ENCODE measurements at regions of chr19 and their contacts with region 1.

Region 1: DNA sequence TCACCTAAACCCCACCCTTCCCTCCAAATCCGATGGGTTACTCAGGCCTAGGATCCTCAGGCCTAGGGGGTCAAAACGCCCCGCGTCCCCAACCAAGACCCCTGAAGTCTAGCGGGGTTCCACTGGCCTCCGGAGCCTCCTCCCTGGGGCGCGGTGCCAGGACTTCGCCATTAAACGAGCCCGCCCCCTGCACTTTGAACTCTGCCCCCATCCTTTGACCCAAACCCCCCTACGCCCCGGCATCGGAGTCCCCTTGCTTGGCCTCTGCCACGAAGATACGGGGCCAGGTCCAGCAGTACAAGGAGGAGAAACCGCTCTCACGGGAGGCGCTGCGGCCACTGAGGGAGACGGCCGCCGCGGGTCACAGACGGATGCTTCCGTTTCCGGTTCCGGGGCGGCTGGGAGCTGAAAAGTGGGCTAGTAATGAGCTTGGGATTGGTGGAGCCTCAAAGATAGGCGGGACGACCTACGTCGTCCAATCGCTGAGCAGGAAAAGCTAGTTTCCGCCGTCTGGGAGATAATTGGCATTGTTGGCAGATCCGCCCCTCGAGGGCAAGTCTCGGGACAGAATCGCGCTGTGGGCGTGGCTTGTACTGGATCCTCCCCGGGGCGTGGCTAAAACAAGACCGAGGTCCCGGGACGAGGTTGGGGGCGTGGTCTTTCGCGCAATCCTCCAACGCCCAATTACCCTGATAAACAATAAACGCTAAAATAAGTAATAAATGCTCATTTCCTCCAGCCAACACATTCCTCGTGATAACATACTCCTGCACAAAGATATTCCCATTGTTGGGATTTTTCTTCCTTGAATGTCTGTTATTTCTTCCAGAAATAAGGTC is 5.7 kb upstream of the ZNF77 start:
- DNase-seq: peak; percentile 100
- ATAC-seq: peak; percentile 96
- H3K4me3 Mint-ChIP-seq: peak overlapping the region; percentile 92
- H3K27ac Mint-ChIP-seq: peak overlapping the region; percentile 96
- H3K4me1 Mint-ChIP-seq: peaks cover 21% of the 10 kb centered on the region
- H3K27me3 Mint-ChIP-seq: no peaks in the 10 kb centered on the region
- CTCF ChIP-seq: no peak

Region 2: DNA sequence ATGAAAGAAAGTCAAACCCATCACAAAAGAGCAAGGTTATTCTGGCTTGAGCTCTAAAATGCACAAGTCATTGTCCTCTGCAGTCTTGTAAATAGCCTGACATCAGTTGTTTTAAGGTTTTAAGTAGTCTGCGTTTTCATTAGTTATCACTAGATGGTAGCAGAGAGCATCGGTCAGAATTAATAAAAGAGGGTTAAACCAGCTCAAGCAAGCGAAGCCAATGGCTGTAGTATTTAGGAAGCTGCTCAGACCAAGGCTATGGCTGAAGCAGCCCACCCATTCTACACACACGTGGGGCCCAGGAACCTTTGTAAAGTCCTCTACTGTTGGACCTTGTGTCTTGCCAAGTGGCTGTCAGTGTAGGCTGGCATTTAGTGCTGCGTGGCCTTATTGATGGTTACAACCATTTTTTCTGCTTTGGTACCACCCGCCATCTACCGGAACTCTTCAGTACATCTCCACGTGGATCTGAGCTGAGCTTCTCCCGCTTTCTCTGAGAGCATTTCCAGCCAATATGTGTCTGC is 63.1 kb before region 1 on chr19:
- CTCF ChIA-PET with region 1: interaction called, 15 read pairs
- POLR2A ChIA-PET with region 1: no interaction called
- intact Hi-C with region 1: no loop called
- DNase-seq: no peak
- ATAC-seq: peak; percentile 69
- H3K4me3 Mint-ChIP-seq: no peak overlapping the region
- H3K27ac Mint-ChIP-seq: no peak overlapping the region
- H3K4me1 Mint-ChIP-seq: peaks cover 11% of the 10 kb centered on the region
- H3K27me3 Mint-ChIP-seq: peaks cover 3% of the 10 kb centered on the region
- CTCF ChIP-seq: peak; percentile 76

Region 3: DNA sequence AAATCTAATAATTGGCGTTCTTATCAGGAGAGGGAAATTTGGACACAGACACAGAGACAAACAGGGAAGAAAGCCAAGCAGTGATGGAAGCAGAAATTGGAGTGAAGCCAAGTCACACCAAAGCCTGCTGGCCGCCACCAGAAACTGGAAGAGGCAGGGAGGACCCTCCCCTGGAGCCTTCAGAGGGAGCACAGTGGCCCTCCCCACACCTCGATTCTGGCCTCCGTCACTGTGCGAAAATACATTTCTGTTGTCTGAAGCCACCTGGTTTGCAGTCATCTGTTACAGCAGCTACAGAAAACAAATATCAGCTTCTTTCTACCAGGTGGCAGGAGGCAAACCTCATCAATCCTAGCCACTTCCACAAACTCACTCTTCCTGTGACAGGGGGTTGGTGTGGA is 18.6 kb after region 1 on chr19:
- CTCF ChIA-PET with region 1: interaction called, 22 read pairs
- POLR2A ChIA-PET with region 1: no interaction called
- intact Hi-C with region 1: no loop called
- DNase-seq: no peak
- ATAC-seq: no peak
- H3K4me3 Mint-ChIP-seq: no peak overlapping the region
- H3K27ac Mint-ChIP-seq: no peak overlapping the region
- H3K4me1 Mint-ChIP-seq: no peaks in the 10 kb centered on the region
- H3K27me3 Mint-ChIP-seq: no peaks in the 10 kb centered on the region
- CTCF ChIP-seq: no peak

Region 4: GRCh38 chr19:3024870-3025550 is 74.5 kb after region 1 on chr19:
- CTCF ChIA-PET with region 1: interaction called, 10 read pairs
- POLR2A ChIA-PET with region 1: no interaction called
- intact Hi-C with region 1: no loop called
- DNase-seq: peak; percentile 34
- ATAC-seq: peak; percentile 50
- H3K4me3 Mint-ChIP-seq: peak overlapping the region; percentile 31
- H3K27ac Mint-ChIP-seq: peak overlapping the region; percentile 49
- H3K4me1 Mint-ChIP-seq: peaks cover 25% of the 10 kb centered on the region
- H3K27me3 Mint-ChIP-seq: peaks cover 14% of the 10 kb centered on the region
- CTCF ChIP-seq: no peak

Region 5: DNA sequence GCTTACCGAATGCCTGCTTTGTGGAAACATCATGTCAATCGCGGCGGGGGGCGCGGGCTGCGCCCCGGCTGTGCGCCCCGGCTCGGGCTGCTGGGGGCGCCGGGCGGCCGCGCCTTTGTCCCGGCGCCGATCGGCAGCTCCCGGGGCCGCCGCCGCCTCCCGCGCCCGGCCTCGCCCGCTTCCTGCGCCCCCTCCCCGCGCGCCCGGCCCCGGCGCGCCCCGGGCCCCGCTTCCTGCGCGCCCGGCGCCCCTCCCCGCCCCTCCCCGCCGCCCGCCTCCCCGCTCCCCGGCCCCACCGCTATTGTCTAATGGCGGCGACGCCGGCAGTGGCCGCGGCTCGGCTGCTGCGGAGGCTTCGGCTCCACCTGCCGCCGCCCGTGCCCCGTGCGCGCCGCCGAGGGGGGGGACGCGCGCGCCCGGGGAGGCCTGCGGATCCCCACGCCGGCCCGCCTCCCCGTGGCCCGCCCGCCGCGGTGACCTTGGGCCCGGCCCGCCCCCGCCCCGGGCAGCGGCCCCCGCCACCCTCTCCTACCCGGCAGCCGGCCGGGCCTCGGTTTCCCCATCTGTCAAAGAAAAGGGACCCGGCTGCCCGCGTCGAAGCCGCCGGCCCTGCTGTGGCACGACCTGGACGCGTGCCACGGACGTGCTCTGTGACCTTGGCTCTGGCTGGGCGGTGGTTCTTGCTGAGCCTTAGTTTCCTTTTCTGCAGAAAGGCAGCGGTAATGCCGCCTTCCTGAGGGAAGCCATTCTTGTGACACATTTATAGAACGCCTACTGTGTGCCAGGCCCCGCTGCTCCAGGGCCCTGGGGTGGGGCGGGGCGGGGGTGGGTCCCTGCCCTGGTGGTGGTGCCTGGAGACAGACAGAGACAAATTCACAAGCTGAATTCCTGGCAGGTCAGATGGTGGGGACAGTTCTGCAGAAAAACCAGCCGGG is 111.9 kb after region 1 on chr19 and contains the start of gene TLE5:
- CTCF ChIA-PET with region 1: interaction called, 8 read pairs
- POLR2A ChIA-PET with region 1: no interaction called
- intact Hi-C with region 1: loop called (anchors 10 kb)
- DNase-seq: peak; percentile 65
- ATAC-seq: peak; percentile 55
- H3K4me3 Mint-ChIP-seq: peak within 1 kb of the TSS; percentile 80
- H3K27ac Mint-ChIP-seq: peak within 1 kb of the TSS; percentile 94
- H3K4me1 Mint-ChIP-seq: peaks cover 29% of the 10 kb centered on the region
- H3K27me3 Mint-ChIP-seq: no peaks in the 10 kb centered on the region
- CTCF ChIP-seq: no peak
- total RNA-seq, gene TLE5: 283 to 296 TPM

Region 6: GRCh38 chr19:3102228-3103140 is 152.0 kb after region 1 on chr19:
- CTCF ChIA-PET with region 1: interaction called, 52 read pairs
- POLR2A ChIA-PET with region 1: interaction called, 3 read pairs
- intact Hi-C with region 1: no loop called
- DNase-seq: no peak
- ATAC-seq: no peak
- H3K4me3 Mint-ChIP-seq: no peak overlapping the region
- H3K27ac Mint-ChIP-seq: no peak overlapping the region
- H3K4me1 Mint-ChIP-seq: peaks cover 23% of the 10 kb centered on the region
- H3K27me3 Mint-ChIP-seq: no peaks in the 10 kb centered on the region
- CTCF ChIP-seq: no peak

Measured in activated CD8-positive, alpha-beta T cell treated with anti-CD3 and anti-CD28 coated beads for 36 hours (primary cell).